Aorta (tissue), 5 donors: ENCODE measurements at regions of chr1 and their contacts with region 1.

Region 1: GRCh38 chr1:54715493-54716298 is at the start of gene TTC4:
- DNase-seq: peak; percentile 87 to 94
- ATAC-seq: peak; percentile 98
- H3K4me3 ChIP-seq: peak within 1 kb of the TSS; percentile 55 to 67
- H3K27ac ChIP-seq: peak within 1 kb of the TSS in 1 of 2 donors; percentile 69
- H3K4me1 ChIP-seq: no peaks in the 10 kb centered on the region
- H3K27me3 ChIP-seq: no peaks in the 10 kb centered on the region
- total RNA-seq, gene TTC4: 13.0 to 15.2 TPM

Region 2: GRCh38 chr1:54499360-54500106 is 216.2 kb before region 1 on chr1:
- intact Hi-C with region 1: loop called in 1 of 2 experiments (anchors 10 kb)
- DNase-seq: no peak
- ATAC-seq: peak; percentile 66
- H3K4me3 ChIP-seq: peak overlapping the region in 1 of 2 donors; percentile 18
- H3K27ac ChIP-seq: no peak overlapping the region
- H3K4me1 ChIP-seq: no peaks in the 10 kb centered on the region
- H3K27me3 ChIP-seq: no peaks in the 10 kb centered on the region

Region 3: DNA sequence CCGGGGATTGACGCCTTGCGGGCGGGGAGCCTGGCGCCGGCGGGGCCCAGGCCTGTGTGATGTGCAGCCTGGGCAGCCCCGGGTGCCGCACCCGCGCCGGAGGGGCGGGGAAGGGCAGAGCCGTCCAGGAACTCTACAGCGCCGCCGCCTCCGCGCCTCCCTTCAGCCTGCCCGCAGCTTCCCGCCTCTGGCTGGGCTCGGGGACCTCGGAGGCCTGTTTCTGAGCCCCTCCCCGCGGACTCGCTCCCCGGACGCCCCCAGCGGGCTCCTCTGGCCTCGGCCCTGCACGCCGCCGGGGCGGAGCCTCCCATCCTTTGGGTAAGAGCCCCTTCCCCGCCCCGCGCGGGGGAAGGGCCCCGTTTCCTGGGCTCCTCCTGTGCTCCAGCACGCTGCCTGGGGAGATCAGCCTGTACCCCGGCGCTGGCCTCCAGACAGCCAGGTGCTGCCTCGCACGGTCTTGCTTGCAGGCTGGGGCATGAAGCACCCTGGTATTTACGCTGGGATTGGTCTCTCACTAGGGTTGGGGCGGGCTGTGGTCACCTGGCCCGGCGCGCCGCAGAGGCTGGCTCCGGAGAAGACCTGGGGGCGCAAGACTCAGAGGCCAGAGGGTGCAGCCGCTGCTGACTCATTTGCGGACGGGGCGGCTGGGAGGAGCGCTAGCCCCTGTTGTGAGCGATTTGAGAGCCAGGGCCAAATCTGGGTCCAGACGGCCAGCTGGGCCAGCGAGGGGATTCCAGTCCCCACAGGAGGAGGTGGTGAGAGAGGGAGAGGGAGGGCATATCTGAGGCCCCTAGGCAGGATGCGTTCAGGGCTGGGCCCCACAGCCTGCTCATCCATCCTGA is 173.4 kb before region 1 on chr1:
- intact Hi-C with region 1: loop called in 1 of 2 experiments (anchors 10 kb)
- DNase-seq: peak; percentile 79 to 90
- ATAC-seq: peak; percentile 91
- H3K4me3 ChIP-seq: peak overlapping the region; percentile 49 to 69
- H3K27ac ChIP-seq: peak overlapping the region; percentile 37 to 46
- H3K4me1 ChIP-seq: peaks cover 0 to 2% of the 10 kb centered on the region in 2 donors
- H3K27me3 ChIP-seq: no peaks in the 10 kb centered on the region

Region 4: GRCh38 chr1:54686155-54686554 is 29.5 kb before region 1 on chr1:
- intact Hi-C with region 1: no loop called
- DNase-seq: no peak
- ATAC-seq: no peak
- H3K4me3 ChIP-seq: no peak overlapping the region
- H3K27ac ChIP-seq: no peak overlapping the region
- H3K4me1 ChIP-seq: no peaks in the 10 kb centered on the region
- H3K27me3 ChIP-seq: no peaks in the 10 kb centered on the region

Region 5: GRCh38 chr1:54764133-54764921 is 48.6 kb after region 1 on chr1 and contains the start of gene PARS2:
- intact Hi-C with region 1: loop called in 1 of 2 experiments (anchors 2 kb)
- DNase-seq: peak; percentile 97 to 98
- ATAC-seq: peak; percentile 98
- H3K4me3 ChIP-seq: peak within 1 kb of the TSS; percentile 54 to 66
- H3K27ac ChIP-seq: peak within 1 kb of the TSS in 1 of 2 donors; percentile 43
- H3K4me1 ChIP-seq: no peaks in the 10 kb centered on the region
- H3K27me3 ChIP-seq: no peaks in the 10 kb centered on the region
- total RNA-seq, gene PARS2: 2.2 to 3.0 TPM